AG04450 (cell line): ENCODE measurements at regions of chr11 and their contacts with region 1.

Region 1: DNA sequence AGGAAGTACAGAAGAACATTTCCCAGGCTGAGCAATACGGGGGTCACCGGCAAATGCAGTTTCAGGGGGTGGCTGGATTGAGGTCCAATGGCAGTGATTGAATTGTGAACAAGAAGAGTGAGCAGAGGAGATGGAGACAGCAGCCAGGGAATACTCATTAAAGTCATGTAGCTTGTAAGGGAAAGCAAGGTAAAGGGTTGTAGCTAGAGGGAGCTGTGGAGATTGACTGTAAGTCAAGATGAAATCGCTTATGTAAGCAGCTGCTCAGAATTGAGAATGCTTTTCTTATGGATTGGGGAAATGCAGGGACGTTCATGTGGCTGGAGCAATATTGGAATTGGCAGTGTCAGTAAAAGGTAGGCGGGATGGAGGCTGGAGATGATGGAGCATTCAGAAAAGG is 111.4 kb upstream of the TBCEL start:
- DNase-seq: peak; percentile 10
- H3K4me3 ChIP-seq: no peak overlapping the region
- H3K27ac ChIP-seq: no peak overlapping the region
- H3K27me3 ChIP-seq: peaks cover 17% of the 10 kb centered on the region
- CTCF ChIP-seq: peak; percentile 47

Region 2: DNA sequence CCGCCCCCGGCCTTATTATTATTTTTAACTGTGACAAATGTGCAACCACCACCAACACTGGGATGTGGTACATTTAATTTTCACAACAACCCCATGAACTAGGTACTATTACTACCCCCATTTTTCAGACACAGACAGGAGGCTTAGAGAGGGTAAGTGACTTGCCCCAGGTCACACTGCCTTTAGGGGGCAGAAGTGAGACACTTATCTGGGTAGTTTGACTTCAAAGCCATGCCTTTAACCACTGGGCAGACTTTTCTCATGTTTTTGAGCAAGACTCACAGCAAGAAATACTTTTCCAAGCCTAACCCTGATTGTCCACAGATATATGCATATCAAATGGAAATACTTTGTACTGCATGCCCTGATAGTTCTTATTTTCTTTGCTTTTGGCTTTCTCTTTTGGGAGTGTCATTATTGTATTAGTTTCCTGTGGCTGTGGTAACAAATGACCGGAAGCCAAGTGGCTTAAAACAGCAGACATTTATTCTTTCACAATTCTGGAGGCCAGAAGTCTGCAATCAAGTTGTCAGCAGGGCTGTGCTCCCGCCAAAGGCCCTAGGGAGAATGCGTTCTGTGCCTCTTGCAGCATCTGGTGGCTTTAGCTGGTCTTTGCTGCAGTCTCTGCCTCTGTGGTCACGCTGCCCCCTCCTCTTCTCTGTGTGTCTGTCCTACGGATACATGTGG is 290.2 kb before region 1 on chr11:
- CTCF ChIA-PET with region 1: no interaction called
- POLR2A ChIA-PET with region 1: no interaction called
- DNase-seq: no peak
- H3K4me3 ChIP-seq: no peak overlapping the region
- H3K27ac ChIP-seq: no peak overlapping the region
- H3K27me3 ChIP-seq: peaks cover 14% of the 10 kb centered on the region
- CTCF ChIP-seq: peak; percentile 8; the same call in 1 of the 2 replicates

Region 3: GRCh38 chr11:120929664-120930154 is 17.2 kb after region 1 on chr11:
- CTCF ChIA-PET with region 1: interaction called, 11 read pairs
- POLR2A ChIA-PET with region 1: no interaction called
- DNase-seq: no peak
- H3K4me3 ChIP-seq: no peak overlapping the region
- H3K27ac ChIP-seq: no peak overlapping the region
- H3K27me3 ChIP-seq: peaks cover 10% of the 10 kb centered on the region
- CTCF ChIP-seq: peak; percentile 57